Heart left ventricle (tissue), 16 donors: ENCODE measurements at regions of chr15 and their contacts with region 1.

Region 1: DNA sequence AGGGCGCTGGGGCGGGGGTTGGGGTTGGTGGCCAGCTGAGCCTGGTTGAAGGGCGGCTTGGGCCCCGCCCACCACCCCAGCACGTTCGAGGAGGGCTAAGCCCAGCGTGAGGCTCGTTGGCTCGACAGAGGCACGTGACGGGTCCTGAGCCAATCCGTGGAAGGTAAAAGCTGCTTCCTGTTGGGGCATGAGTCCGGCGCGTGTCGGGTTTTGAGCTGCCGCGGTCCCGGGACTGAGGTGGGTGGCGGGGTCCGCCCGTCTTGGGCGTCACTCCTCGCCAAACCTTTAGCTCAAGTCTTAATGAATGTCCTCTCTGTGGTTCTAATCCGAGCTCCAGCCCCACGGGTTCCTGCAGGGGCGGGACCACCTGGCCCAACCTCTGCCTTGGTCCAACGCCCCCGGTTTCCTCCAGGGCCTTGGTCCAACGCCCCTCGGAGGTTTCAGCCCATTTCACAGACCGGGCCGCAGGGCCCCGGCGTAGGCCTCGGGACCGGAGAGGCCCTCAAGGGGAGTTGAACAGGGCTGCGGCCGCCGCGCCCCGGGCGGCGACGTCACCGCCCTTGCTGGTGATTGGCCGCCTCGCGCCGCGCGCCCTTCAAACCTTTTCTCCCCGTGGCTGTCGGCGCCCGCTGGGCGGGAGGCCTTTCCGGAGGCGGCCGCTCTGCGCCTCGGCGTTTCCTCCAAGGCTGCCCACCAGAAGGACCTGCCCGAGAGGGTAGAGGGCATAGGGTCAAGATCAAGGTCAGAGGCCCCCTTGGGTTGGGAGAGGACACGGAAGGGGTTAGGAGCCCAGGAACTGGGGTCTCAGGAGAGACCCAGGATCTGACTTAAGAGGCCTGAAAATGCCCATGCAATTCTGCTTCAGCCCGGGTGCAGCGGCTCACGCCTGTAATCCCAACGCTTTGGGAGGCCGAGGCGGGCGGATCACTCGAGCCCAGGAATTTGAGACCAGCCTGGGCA is at the start of gene RCCD1:
- DNase-seq: peak; percentile 94 to 97 (median 97)
- ATAC-seq: peak; percentile 93 to 97 (median 94)
- H3K4me3 ChIP-seq: peak within 1 kb of the TSS; percentile 38 to 96 (median 79)
- H3K27ac ChIP-seq: peak within 1 kb of the TSS; percentile 78 to 93 (median 88)
- H3K4me1 ChIP-seq: peaks cover 0 to 44% (median 24%) of the 10 kb centered on the region in 12 donors
- H3K27me3 ChIP-seq: no peaks in the 10 kb centered on the region
- CTCF ChIP-seq: no peak
- POLR2A ChIP-seq: peak in 1 of 2 donors; percentile 59
- total RNA-seq, gene RCCD1: 5.6 to 11.1 (median 7.3) TPM

Region 2: DNA sequence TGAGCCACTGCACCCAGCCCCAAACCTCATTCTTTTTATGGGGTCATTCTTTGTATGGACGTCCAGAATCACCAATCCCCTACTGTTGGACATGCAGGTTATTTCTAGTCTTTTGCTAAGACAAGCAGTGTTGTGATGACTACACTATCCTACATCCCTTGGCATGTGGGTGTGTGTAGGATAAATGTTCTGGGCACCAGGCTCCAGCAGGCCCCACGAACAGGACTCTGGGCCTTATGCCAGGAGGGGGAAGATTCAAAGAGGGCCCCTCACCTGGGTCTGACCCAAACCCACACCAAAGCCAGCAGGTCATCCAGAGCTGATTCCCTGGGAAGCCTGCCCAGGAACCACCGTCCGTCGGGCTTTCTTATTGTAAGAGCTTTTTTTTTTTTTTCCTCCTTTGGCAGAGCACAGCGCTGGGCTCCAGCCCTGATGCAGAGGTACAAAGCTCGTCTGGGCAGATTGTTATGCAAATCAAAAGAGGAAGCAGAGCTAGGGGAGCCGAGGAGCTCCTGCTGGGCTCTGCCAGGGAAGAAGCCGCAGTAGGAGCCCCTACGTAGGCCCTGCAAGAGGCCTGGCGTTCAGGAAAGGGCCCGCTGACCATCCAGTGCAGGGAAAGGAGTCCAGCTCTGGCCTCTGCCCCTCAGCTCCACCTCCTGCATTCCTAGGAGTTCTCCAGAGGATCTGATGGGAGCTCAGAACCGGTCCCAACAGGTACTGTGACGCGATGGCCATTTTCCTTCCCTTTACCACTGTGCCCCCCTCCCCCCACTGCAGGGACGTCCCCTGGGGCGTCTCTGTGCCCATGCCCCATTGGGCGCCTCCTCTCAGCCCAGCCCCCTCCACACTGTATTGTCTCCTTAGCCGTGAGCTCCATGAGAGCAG is 115.6 kb before region 1 on chr15:
- intact Hi-C with region 1: no loop called
- DNase-seq: no peak
- ATAC-seq: peak; percentile 52 to 75 (median 68)
- H3K4me3 ChIP-seq: peak overlapping the region in 3 of 12 donors; percentile 13 to 45 (median 15)
- H3K27ac ChIP-seq: peak overlapping the region in 1 of 12 donors; percentile 88
- H3K4me1 ChIP-seq: peaks cover 0 to 44% (median 0%) of the 10 kb centered on the region in 12 donors
- H3K27me3 ChIP-seq: no peaks in the 10 kb centered on the region
- CTCF ChIP-seq: no peak
- POLR2A ChIP-seq: no peak

Region 3: DNA sequence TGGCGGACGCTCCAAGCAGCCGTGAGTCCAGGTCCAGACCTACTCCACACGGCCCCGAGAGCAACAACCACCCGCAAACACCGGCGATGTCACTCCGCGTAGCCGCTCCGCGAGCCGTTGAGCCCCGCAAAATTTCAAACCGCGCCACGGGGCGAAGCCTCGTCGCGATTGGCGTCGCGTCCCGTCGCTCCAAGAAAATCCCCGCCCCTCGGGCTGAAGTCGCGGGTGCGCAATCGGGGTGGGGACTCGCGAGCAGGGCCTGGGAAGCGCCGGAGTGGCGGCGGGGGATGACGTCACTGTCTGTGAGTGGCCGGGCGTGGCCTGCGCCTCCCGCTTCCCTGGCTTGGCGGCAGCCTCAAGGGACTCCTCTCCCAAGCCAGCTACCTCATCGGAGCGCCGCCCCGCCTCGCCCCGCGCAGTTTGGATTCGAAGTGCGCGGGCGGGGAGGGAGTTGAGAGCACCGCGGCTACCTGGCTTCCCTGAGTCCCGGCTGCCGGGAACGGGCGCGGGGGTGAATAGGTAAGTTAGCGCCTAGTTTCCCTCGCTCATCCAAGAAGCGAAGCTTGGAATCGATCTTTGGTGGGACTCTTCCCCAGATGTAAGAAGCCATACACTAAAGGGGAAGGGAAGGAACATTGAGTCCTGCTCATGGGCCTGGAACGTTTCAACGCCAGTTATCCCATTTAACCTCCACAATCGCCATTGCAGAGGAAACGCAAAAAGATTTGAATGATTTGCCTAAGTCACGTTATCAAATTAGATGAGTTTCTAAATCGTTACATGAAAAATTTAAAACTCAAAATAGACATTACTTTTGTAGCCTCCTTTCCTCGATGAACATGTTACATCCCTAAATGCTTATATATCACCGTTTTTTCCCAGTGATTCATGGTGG is 39.7 kb after region 1 on chr15 and contains the start of gene PRC1:
- intact Hi-C with region 1: loop called in 3 of 10 experiments (anchors 1 to 5 kb)
- DNase-seq: peak; percentile 98 to 99 (median 99)
- ATAC-seq: peak; percentile 99 to 100 (median 100)
- H3K4me3 ChIP-seq: peak within 1 kb of the TSS; percentile 58 to 99 (median 86)
- H3K27ac ChIP-seq: peak within 1 kb of the TSS; percentile 54 to 91 (median 82)
- H3K4me1 ChIP-seq: peaks cover 0 to 19% (median 3%) of the 10 kb centered on the region in 12 donors
- H3K27me3 ChIP-seq: no peaks in the 10 kb centered on the region
- CTCF ChIP-seq: no peak
- POLR2A ChIP-seq: peak in 1 of 2 donors; percentile 64
- total RNA-seq, gene PRC1: 3.1 to 25.7 (median 4.7) TPM

Region 4: DNA sequence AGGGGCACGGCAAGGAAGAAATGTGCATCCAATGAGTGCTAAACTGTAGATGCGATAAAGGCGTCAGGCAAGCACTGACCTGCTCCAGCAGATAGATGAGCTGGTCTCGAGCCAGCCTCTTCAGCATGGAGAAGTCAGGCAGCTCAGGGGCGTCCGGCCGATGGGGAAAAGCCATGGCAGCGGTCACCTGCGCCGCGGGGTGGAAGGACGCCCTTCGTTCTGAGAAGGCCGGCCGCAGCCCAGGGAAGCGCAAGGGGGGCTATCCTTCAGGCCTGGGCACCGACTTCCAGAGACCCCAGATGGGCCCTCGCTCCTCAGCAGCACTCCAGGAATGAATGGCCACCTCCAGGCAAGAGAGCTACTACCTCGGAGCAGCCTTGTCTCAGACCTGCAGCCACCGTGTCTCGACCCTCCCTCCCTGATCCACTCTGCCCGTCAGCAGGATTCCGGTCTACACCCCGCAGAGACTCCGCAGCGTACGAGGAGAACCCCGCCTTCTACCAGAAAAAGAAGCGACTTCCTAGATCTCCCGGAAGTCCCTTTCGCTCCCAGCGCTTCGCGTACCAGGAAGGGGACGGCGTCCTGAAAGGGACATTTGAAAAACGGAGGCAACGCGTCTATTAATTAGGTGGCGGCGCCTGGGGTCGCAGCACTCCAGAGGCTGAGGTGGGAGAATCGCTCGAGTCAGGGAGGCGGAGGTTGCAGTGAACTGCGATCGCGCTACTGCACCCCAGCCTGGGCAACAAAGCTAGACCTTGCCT is 67.3 kb after region 1 on chr15 and contains the start of gene VPS33B:
- intact Hi-C with region 1: loop called in 1 of 10 experiments (anchors 10 kb)
- DNase-seq: peak; percentile 86 to 90 (median 90)
- ATAC-seq: peak; percentile 72 to 96 (median 94)
- H3K4me3 ChIP-seq: peak within 1 kb of the TSS; percentile 69 to 100 (median 97)
- H3K27ac ChIP-seq: peak within 1 kb of the TSS in 11 of 12 donors; percentile 48 to 86 (median 77)
- H3K4me1 ChIP-seq: peaks cover 0 to 27% (median 15%) of the 10 kb centered on the region in 12 donors
- H3K27me3 ChIP-seq: no peaks in the 10 kb centered on the region
- CTCF ChIP-seq: no peak
- POLR2A ChIP-seq: peak in 1 of 2 donors; percentile 41
- total RNA-seq, gene VPS33B: 2.9 to 7.9 (median 5.7) TPM

Region 5: GRCh38 chr15:91032919-91033803 is 78.2 kb after region 1 on chr15:
- intact Hi-C with region 1: loop called in 5 of 10 experiments (anchors 5 to 10 kb)
- DNase-seq: peak; percentile 29 to 66 (median 48)
- ATAC-seq: peak in 1 of 4 donors; percentile 60
- H3K4me3 ChIP-seq: no peak overlapping the region
- H3K27ac ChIP-seq: no peak overlapping the region
- H3K4me1 ChIP-seq: no peaks in the 10 kb centered on the region
- H3K27me3 ChIP-seq: peaks cover 0 to 8% (median 0%) of the 10 kb centered on the region in 9 donors
- CTCF ChIP-seq: peak; percentile 30 to 68 (median 52)
- POLR2A ChIP-seq: no peak

Region 6: GRCh38 chr15:91049378-91050127 is 94.6 kb after region 1 on chr15:
- intact Hi-C with region 1: loop called (anchors 2 to 5 kb)
- DNase-seq: peak in 3 of 5 donors; percentile 39 to 51 (median 48)
- ATAC-seq: peak; percentile 47 to 93 (median 86)
- H3K4me3 ChIP-seq: no peak overlapping the region
- H3K27ac ChIP-seq: no peak overlapping the region
- H3K4me1 ChIP-seq: peaks cover 0 to 10% (median 0%) of the 10 kb centered on the region in 12 donors
- H3K27me3 ChIP-seq: peaks cover 0 to 11% (median 0%) of the 10 kb centered on the region in 9 donors
- CTCF ChIP-seq: peak; percentile 46 to 75 (median 58)
- POLR2A ChIP-seq: no peak

Region 7: GRCh38 chr15:91263996-91264531 is 309.1 kb after region 1 on chr15:
- intact Hi-C with region 1: loop called in 3 of 10 experiments (anchors 5 to 10 kb)
- DNase-seq: peak; percentile 46 to 86 (median 81)
- ATAC-seq: peak; percentile 89 to 96 (median 95)
- H3K4me3 ChIP-seq: peak overlapping the region in 10 of 12 donors; percentile 16 to 42 (median 33)
- H3K27ac ChIP-seq: peak overlapping the region; percentile 57 to 90 (median 68)
- H3K4me1 ChIP-seq: peaks cover 0 to 32% (median 20%) of the 10 kb centered on the region in 12 donors
- H3K27me3 ChIP-seq: no peaks in the 10 kb centered on the region
- CTCF ChIP-seq: no peak
- POLR2A ChIP-seq: peak in 1 of 2 donors; percentile 28

Region 8: GRCh38 chr15:91271565-91272153 is 316.7 kb after region 1 on chr15:
- intact Hi-C with region 1: loop called in 9 of 10 experiments (anchors 2 to 10 kb)
- DNase-seq: peak in 4 of 5 donors; percentile 24 to 44 (median 38)
- ATAC-seq: peak in 3 of 4 donors; percentile 44 to 82 (median 74)
- H3K4me3 ChIP-seq: no peak overlapping the region
- H3K27ac ChIP-seq: no peak overlapping the region
- H3K4me1 ChIP-seq: peaks cover 0 to 7% (median 0%) of the 10 kb centered on the region in 12 donors
- H3K27me3 ChIP-seq: no peaks in the 10 kb centered on the region
- CTCF ChIP-seq: peak; percentile 66 to 87 (median 83)
- POLR2A ChIP-seq: no peak